K562 (cell line): ENCODE measurements at regions of chr6 and their contacts with region 1.

Region 1: GRCh38 chr6:33761922-33762629 is 15.4 kb upstream of the IP6K3 start:
- DNase-seq: peak; percentile 83 to 87 (median 84)
- ATAC-seq: peak; percentile 97
- H3K4me3 ChIP-seq: no peak overlapping the region
- H3K27ac ChIP-seq: no peak overlapping the region
- H3K4me1 ChIP-seq: peaks cover 0 to 16% of the 10 kb centered on the region in 2 experiments; a peak in 2 of 5 replicates
- H3K27me3 ChIP-seq: peaks cover 32 to 66% of the 10 kb centered on the region in 2 experiments
- CTCF ChIP-seq: peak; percentile 93 to 97 (median 96)
- EP300 ChIP-seq: no peak
- POLR2A ChIP-seq: no peak
- RAD21 ChIP-seq: peak; percentile 85 to 96

Region 2: DNA sequence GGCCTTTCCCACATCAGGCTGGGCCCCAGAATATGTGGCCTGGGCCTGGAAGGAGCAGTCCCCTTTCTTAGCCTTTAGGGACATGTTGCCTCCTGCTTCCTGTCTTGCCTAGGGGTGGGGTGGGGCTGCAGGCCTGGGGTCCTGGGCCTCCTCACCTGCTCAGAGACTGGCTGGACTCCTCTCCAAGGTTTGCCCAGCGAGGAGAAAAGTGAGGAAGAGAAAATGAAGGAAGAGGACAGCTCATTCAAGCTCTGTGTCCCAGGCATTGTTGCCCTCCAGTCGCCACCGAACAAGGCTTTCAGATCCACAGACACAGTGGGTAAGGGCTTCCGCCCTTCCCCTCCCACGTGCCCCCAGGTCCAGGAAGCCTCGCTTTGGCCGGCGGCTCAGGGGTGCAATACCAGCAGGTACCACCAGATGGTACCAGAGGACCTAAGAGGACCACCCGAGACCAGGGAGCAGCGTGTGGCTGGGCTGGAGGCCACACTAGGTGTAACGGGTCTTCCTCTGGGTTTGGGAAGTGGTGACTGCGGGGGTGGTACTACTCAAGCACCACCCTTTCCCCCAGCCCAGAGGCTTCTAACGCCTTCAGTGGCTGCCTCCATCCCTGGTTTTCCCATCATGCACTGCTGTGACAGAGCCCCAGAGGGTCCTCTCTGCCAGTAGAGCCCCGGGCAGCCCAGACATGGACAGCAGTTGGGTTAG is 176.5 kb before region 1 on chr6:
- CTCF ChIA-PET with region 1: interaction called, 18 read pairs
- POLR2A ChIA-PET with region 1: no interaction called
- in situ Hi-C with region 1: loop called (anchors 5 kb)
- intact Hi-C with region 1: loop called (anchors 1 kb)
- DNase-seq: peak; percentile 90 to 92 (median 92)
- ATAC-seq: peak; percentile 87
- H3K4me3 ChIP-seq: no peak overlapping the region
- H3K27ac ChIP-seq: no peak overlapping the region
- H3K4me1 ChIP-seq: peaks cover 12 to 19% of the 10 kb centered on the region in 2 experiments
- H3K27me3 ChIP-seq: no peaks in the 10 kb centered on the region
- CTCF ChIP-seq: peak; percentile 94 to 98 (median 94)
- EP300 ChIP-seq: no peak
- POLR2A ChIP-seq: no peak
- RAD21 ChIP-seq: peak; percentile 86 to 95

Region 3: DNA sequence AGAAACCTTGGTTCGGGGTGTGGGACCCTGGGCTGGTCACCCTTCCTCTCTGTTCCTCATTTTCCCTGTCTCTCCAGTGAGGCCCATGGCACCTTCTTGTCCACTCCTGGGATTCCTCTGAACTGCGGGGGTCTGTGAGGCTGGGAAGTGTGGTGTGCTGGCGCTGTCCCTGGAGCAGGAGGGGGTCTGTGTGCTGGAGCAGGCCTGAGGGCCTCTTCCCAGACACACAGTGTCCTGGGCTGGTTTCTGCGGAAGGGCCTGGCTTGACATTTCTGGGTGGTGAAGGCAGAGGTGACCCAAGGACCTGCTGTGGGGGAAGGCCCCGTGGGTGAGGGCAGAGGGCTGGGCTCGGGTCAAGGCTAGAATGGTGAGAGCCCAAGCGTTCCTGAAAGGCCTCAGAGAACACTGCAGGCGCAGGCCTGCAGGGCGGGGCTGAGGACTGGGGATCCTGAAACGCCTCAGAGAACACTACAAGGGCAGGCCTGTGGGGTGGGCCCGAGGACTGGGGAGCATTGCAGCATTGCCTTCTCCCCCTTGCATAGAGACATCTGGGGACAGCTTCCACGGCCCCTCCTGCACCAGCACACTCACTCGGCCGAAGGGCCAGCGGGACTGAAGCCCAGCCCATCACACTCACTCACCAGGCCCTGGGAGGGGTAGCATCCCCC is 171.4 kb before region 1 on chr6:
- CTCF ChIA-PET with region 1: interaction called, 18 read pairs
- POLR2A ChIA-PET with region 1: no interaction called
- in situ Hi-C with region 1: loop called (anchors 5 kb)
- intact Hi-C with region 1: loop called (anchors 1 kb)
- DNase-seq: peak in 3 of 4 experiments; percentile 49 to 63 (median 55)
- ATAC-seq: peak; percentile 58
- H3K4me3 ChIP-seq: no peak overlapping the region
- H3K27ac ChIP-seq: peak overlapping the region; percentile 55; the same call in 1 of the 3 replicates
- H3K4me1 ChIP-seq: peaks cover 18 to 32% of the 10 kb centered on the region in 2 experiments
- H3K27me3 ChIP-seq: no peaks in the 10 kb centered on the region
- CTCF ChIP-seq: peak in 2 of 3 experiments; percentile 19 to 23; a peak in 1 of 6 replicates
- EP300 ChIP-seq: no peak
- POLR2A ChIP-seq: no peak
- RAD21 ChIP-seq: peak in 1 of 2 experiments; percentile 26; a peak in 2 of 4 replicates

Region 4: GRCh38 chr6:33711140-33712129 is 50.6 kb before region 1 on chr6 and contains the start of gene UQCC2:
- CTCF ChIA-PET with region 1: interaction called, 14 read pairs
- POLR2A ChIA-PET with region 1: interaction called, 12 read pairs
- in situ Hi-C with region 1: no loop called
- intact Hi-C with region 1: loop called (anchors 1 kb)
- DNase-seq: peak; percentile 99 to 100 (median 100)
- ATAC-seq: peak; percentile 98
- H3K4me3 ChIP-seq: peak within 1 kb of the TSS; percentile 58
- H3K27ac ChIP-seq: peak within 1 kb of the TSS; percentile 93
- H3K4me1 ChIP-seq: peaks cover 12 to 19% of the 10 kb centered on the region in 2 experiments
- H3K27me3 ChIP-seq: peaks cover 0 to 11% of the 10 kb centered on the region in 2 experiments; a peak in 4 of 5 replicates
- CTCF ChIP-seq: peak; percentile 91 to 98 (median 93)
- EP300 ChIP-seq: 0 out of 2 replicates have a peak, but pooled peaks have one; percentile 21
- POLR2A ChIP-seq: peak; percentile 99
- RAD21 ChIP-seq: peak; percentile 84 to 92
- polyA plus RNA-seq, gene UQCC2: 832 to 927 TPM

Region 5: GRCh38 chr6:33744001-33744848 is 17.9 kb before region 1 on chr6:
- CTCF ChIA-PET with region 1: interaction called, 12 read pairs
- POLR2A ChIA-PET with region 1: interaction called, 5 read pairs
- in situ Hi-C with region 1: no loop called
- intact Hi-C with region 1: loop called (anchors 1 kb)
- DNase-seq: peak; percentile 84 to 91 (median 87)
- ATAC-seq: peak; percentile 86
- H3K4me3 ChIP-seq: no peak overlapping the region
- H3K27ac ChIP-seq: no peak overlapping the region
- H3K4me1 ChIP-seq: peaks cover 9 to 11% of the 10 kb centered on the region in 2 experiments; a peak in 2 of 5 replicates
- H3K27me3 ChIP-seq: peaks cover 28 to 60% of the 10 kb centered on the region in 2 experiments; a peak in 4 of 5 replicates
- CTCF ChIP-seq: peak; percentile 94 to 97 (median 96)
- EP300 ChIP-seq: no peak
- POLR2A ChIP-seq: no peak
- RAD21 ChIP-seq: peak; percentile 66 to 91

Region 6: DNA sequence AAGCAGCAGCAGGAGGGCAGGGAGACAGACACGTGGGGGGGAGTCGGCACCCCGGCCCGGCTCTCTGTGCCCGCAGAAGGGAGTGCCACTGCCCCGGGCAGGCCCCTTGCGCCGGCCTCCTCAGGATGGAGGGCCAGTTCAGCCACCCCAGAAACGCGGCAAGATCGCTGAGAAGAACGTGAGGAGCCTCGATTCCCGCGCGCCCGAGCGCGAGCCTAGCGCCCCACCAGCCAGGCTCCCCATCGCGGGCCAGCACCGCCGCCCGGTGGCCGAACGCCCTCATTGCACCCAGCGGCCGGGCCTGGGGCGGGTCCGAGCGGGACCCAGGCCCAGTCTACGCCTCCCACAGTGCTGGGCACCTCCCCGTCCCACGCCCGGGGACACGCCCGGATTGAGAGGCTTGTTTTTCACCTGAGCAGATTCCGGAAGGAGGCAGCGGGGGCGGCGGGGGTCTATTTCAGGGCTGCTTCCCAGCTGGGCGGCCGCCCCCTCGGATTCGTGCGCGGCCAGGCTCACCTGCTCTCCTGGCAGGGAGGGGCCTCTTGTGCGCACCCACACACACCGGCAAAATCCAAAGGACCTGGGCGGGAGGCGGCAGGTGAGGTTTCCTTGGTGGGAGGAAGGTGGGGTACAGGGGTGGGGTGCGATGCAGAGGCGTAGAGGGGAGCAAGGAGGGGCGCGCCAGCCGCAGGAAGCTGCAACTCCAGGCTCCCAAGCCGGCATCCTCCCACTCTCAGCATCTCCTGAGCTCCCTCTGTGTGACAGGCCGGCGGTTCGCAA is 392.8 kb after region 1 on chr6:
- CTCF ChIA-PET with region 1: no interaction called
- POLR2A ChIA-PET with region 1: no interaction called
- in situ Hi-C with region 1: loop called (anchors 5 kb)
- intact Hi-C with region 1: no loop called
- DNase-seq: peak; percentile 75 to 97 (median 94)
- ATAC-seq: peak; percentile 96
- H3K4me3 ChIP-seq: no peak overlapping the region
- H3K27ac ChIP-seq: no peak overlapping the region
- H3K4me1 ChIP-seq: peaks cover 0 to 14% of the 10 kb centered on the region in 2 experiments; a peak in 2 of 5 replicates
- H3K27me3 ChIP-seq: peaks cover 22 to 68% of the 10 kb centered on the region in 2 experiments; a peak in 4 of 5 replicates
- CTCF ChIP-seq: peak; percentile 97 to 98 (median 98)
- EP300 ChIP-seq: no peak
- POLR2A ChIP-seq: no peak
- RAD21 ChIP-seq: peak; percentile 95 to 98